ENCODE measurements at regions of chr13 and their contacts with region 1.

Region 1: GRCh38 chr13:73984949-73985691 is 149.1 kb downstream of the KLF12 start:
- DNase-seq: peak; percentile 89
- ATAC-seq: peak; percentile 88
- H3K4me3 Mint-ChIP-seq: peak overlapping the region; percentile 60
- H3K27ac Mint-ChIP-seq: peak overlapping the region; percentile 90
- H3K4me1 Mint-ChIP-seq: peaks cover 56% of the 10 kb centered on the region
- H3K27me3 Mint-ChIP-seq: no peaks in the 10 kb centered on the region
- CTCF ChIP-seq: no peak

Region 2: GRCh38 chr13:73995736-73996135 is 10.6 kb after region 1 on chr13:
- CTCF ChIA-PET with region 1: interaction called, 10 read pairs
- POLR2A ChIA-PET with region 1: no interaction called
- intact Hi-C with region 1: no loop called
- DNase-seq: no peak
- ATAC-seq: no peak
- H3K4me3 Mint-ChIP-seq: no peak overlapping the region
- H3K27ac Mint-ChIP-seq: no peak overlapping the region
- H3K4me1 Mint-ChIP-seq: peaks cover 45% of the 10 kb centered on the region
- H3K27me3 Mint-ChIP-seq: no peaks in the 10 kb centered on the region
- CTCF ChIP-seq: no peak

Measured in activated CD8-positive, alpha-beta T cell treated with anti-CD3 and anti-CD28 coated beads for 36 hours (primary cell).